ENCODE measurements at regions of chr11 and their contacts with region 1.

Region 1: GRCh38 chr11:126211235-126212088 is at the starts of genes FAM118B and RPUSD4:
- DNase-seq: peak; percentile 98 to 99 (median 99)
- H3K4me3 ChIP-seq: peak within 1 kb of the TSS; percentile 59 to 88 (median 86)
- H3K27ac ChIP-seq: peak within 1 kb of the TSS in 4 of 5 donors; percentile 24 to 63 (median 35)
- H3K4me1 ChIP-seq: peaks cover 4 to 20% of the 10 kb centered on the region in 2 donors
- H3K27me3 ChIP-seq: no peaks in the 10 kb centered on the region
- CTCF ChIP-seq: no peak
- POLR2A ChIP-seq: peak in 1 of 2 donors; percentile 86
- total RNA-seq, gene FAM118B: 12.0 to 26.6 (median 17.2) TPM
- total RNA-seq, gene RPUSD4: 10.6 to 27.5 (median 21.1) TPM

Region 2: DNA sequence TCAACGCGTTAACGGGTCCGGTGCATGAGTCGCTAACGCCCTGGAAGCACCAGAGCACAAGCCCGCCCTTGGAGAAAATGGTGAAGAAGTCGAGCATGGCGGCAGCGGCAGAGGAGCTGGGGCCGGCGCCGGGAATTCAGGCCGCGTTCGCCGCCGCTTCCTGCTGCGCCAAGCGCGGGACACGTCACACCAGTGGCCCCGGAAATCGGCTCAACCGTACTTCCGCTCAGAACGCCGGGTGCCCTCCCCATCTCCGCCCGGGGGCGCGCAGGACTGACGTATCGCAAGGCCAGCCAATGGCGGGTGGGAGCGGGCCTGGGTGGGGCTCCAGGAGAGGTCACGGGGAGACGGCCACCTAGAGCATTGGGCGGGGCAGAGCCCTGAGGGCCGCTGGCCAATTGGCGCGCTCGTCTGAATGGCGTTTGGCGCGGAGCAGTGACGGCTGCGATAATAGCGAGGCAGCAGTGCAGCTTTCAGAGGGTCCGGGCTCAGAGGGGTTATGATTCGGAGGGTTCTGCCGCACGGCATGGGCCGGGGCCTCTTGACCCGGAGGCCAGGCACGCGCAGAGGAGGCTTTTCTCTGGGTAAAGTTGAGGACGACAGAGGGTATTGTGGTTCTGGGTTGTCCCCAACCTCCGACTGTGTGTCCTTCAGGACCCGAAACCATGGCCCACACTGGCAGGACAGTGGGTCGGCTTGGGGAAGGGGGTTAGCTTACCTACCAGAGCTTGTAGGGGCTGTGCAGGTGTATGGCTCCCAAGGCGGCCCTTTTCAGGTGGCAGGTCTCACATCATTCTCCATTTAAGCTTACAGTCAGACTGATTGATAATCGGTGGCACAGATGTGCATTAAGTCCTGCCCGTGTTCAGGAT is 57.5 kb after region 1 on chr11 and contains the starts of genes FOXRED1 and SRPRA:
- intact Hi-C with region 1: loop called (anchors 5 to 10 kb)
- DNase-seq: peak; percentile 100
- H3K4me3 ChIP-seq: peak within 1 kb of the TSS; percentile 35 to 94 (median 82)
- H3K27ac ChIP-seq: peak within 1 kb of the TSS in 4 of 5 donors; percentile 71 to 97 (median 87)
- H3K4me1 ChIP-seq: peaks cover 13 to 21% of the 10 kb centered on the region in 2 donors
- H3K27me3 ChIP-seq: no peaks in the 10 kb centered on the region
- CTCF ChIP-seq: no peak
- POLR2A ChIP-seq: peak; percentile 78 to 85
- total RNA-seq, gene FOXRED1: 7.2 to 33.0 (median 27.6) TPM
- total RNA-seq, gene SRPRA: 80.5 to 194 (median 110) TPM

Measured in adrenal gland (tissue), 19 donors.